Gastrocnemius medialis (tissue), 4 donors: ENCODE measurements at regions of chr2 and their contacts with region 1.

Region 1: GRCh38 chr2:16756831-16757644 is 91.4 kb upstream of the CYRIA start:
- DNase-seq: peak; percentile 54 to 63
- ATAC-seq: peak; percentile 82 to 95
- H3K4me3 ChIP-seq: no peak overlapping the region
- H3K27ac ChIP-seq: peak overlapping the region in 3 of 4 donors; percentile 28 to 57 (median 56)
- H3K4me1 ChIP-seq: no peaks in the 10 kb centered on the region
- H3K27me3 ChIP-seq: no peaks in the 10 kb centered on the region
- CTCF ChIP-seq: peak; percentile 91 to 96 (median 94)
- POLR2A ChIP-seq: no peak

Region 2: DNA sequence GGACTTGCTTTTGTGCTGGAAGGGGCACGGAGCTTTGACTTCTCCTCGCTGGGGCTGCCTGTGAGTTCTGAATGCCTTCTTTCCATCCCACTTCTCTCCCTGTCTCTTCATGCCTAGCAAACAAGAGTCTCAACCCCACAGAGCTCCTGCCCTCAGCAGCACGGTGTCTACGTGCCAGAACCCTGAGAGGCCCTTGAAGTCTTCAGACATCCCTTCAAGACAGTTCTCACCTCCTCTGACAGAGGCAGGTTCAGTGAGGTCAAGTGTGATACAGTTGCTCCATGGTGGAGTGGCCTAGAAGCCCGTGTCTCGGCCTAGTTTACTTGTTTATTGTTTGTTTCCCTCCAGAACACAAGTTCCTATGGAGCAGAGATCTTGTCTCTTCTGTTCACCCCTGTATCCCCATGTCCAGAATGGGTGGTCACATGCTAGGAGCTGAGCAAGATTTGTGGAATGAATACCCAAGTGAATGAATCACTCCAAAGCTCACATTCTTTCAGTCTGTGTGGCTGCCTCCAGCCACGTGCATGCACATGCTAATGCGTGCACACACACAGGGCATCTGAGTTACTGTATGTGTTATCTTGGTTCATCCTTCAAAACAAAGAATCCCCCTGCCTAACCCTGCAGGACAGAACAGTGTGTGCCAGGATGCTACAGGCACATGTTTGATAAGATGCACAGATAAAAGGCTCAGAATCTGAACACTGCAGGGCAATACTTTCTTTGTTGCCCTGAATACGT is 1587.5 kb before region 1 on chr2:
- in situ Hi-C with region 1: no loop called
- intact Hi-C with region 1: no loop called
- DNase-seq: no peak
- ATAC-seq: no peak
- H3K4me3 ChIP-seq: no peak overlapping the region
- H3K27ac ChIP-seq: no peak overlapping the region
- H3K4me1 ChIP-seq: no peaks in the 10 kb centered on the region
- H3K27me3 ChIP-seq: no peaks in the 10 kb centered on the region
- CTCF ChIP-seq: no peak
- POLR2A ChIP-seq: no peak

Region 3: DNA sequence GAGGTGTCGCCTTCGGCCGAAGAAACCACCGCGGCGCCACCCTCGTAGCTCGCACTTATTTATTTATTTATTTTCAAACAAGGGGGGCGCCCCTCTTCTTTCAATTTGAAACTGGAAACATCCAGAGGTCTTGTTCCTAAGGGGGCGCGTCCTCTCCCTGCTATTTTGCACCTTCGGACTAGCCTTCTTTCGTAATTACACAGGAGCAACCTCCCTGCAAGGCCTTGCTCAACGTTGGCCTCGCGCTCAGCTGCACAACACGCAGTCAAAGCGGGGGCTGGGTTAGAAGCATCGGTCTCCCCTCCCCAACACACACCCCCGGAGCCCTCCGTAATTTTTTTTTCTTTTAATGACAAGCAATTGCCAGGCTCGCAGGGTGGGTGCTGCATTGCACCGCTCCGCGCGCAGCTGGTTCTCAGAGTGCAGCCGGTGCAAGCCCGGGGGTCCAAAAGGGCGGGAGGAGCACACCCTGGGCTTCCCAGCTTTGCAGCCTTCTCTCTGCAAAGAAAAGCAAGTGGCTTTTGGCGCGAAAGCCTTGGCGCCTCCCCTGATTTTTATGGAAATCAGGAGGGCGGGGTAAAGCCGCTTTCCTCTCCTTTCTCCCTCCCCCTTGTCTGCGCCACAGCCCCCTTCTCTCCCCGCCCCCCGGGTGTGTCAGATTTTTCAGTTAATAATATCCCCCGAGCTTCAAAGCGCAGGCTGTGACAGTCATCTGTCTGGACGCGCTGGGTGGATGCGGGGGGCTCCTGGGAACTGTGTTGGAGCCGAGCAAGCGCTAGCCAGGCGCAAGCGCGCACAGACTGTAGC is 817.0 kb before region 1 on chr2 and contains the start of gene MYCN:
- in situ Hi-C with region 1: loop called in 3 of 4 experiments (anchors 25 kb)
- intact Hi-C with region 1: loop called (anchors 5 kb)
- DNase-seq: peak; percentile 27 to 32
- ATAC-seq: peak; percentile 25 to 65
- H3K4me3 ChIP-seq: peak within 1 kb of the TSS; percentile 52 to 57 (median 56)
- H3K27ac ChIP-seq: no peak within 1 kb of the TSS
- H3K4me1 ChIP-seq: peaks cover 23 to 43% of the 10 kb centered on the region in 2 donors
- H3K27me3 ChIP-seq: peaks cover 21 to 36% (median 27%) of the 10 kb centered on the region in 3 donors
- CTCF ChIP-seq: peak; percentile 42 to 73 (median 52)
- POLR2A ChIP-seq: no peak
- total RNA-seq, gene MYCN: 0.17 to 0.25 TPM in 2 of 4 donors, not detected in the others

Region 4: GRCh38 chr2:16553226-16553625 is 203.8 kb before region 1 on chr2:
- in situ Hi-C with region 1: no loop called
- intact Hi-C with region 1: loop called (anchors 2 kb)
- DNase-seq: peak in 1 of 2 donors; percentile 20
- ATAC-seq: peak; percentile 51 to 76
- H3K4me3 ChIP-seq: no peak overlapping the region
- H3K27ac ChIP-seq: no peak overlapping the region
- H3K4me1 ChIP-seq: no peaks in the 10 kb centered on the region
- H3K27me3 ChIP-seq: no peaks in the 10 kb centered on the region
- CTCF ChIP-seq: peak; percentile 46 to 61 (median 61)
- POLR2A ChIP-seq: no peak

Region 5: DNA sequence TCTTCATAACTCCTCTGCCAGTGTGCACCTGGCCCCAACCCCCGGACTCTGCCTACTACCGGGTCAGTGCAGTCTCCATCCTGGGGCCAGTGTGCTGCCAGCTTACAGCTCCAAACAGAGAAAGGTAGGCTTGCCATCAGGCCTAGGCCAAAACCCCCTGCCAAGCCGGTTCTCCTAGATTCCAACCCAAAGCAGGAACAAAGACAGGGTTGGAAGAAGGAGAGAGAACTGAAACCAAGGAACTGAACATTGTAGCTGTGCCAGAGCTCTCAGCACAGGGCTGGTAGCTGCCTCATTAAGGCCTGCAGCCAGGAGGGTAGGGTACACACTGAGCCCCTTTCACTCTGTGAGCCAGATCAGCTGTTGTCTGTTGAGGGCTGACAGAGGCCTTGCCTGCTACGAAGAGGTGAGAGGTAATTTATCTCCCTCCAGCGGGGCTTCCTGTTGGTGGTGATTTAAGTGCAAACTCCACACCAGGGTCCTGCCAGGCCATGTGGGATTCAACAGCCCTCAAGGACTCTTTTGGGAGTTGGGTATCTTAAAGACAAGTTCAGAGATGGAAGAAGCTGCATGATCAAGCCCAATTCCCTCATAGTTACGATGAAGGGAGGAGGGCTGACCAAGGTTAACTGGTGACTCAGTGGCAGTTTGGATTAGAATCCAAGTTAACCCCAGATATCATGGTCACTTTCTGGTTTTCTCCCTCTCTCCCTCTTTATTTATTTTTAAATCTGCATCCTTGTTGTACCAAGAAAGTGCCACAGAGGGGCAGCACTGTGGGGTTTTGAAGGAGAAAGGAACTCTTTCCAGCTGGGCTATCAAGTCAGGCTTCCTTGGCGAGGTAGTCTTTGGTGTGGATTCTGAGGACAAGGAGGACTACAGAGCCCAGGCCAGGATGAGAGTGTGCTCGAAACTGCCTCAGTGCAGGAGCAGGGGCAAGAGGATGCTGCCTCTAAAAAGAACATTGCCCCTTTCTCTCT is 139.5 kb before region 1 on chr2:
- in situ Hi-C with region 1: loop called (anchors 5 kb)
- intact Hi-C with region 1: loop called (anchors 1 kb)
- DNase-seq: peak in 1 of 2 donors; percentile 21
- ATAC-seq: peak in 1 of 2 donors; percentile 43
- H3K4me3 ChIP-seq: no peak overlapping the region
- H3K27ac ChIP-seq: peak overlapping the region in 2 of 4 donors; percentile 6 to 10
- H3K4me1 ChIP-seq: peaks cover 12 to 35% of the 10 kb centered on the region in 2 donors
- H3K27me3 ChIP-seq: no peaks in the 10 kb centered on the region
- CTCF ChIP-seq: peak in 4 of 5 experiments; percentile 26 to 48 (median 40)
- POLR2A ChIP-seq: no peak

Region 6: DNA sequence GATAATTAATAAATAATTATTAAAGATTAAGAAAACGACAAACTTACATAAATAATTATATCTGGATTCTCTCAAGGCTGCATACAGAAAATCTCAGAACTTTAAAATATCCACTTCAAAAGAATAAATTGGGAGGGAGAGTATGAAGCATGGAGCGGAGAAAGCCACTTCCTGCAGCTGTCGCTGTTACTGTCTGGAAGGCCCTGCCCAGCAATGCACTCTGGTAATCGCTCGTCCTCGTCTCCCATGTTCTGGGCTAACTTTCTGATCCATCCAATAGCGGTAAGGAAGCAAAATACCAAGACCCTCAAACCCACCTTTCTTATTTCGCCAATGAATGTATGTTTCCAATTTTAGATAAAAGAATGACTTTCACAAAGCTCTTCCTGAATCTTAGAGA is 118.1 kb before region 1 on chr2:
- in situ Hi-C with region 1: no loop called
- intact Hi-C with region 1: loop called (anchors 1 kb)
- DNase-seq: no peak
- ATAC-seq: no peak
- H3K4me3 ChIP-seq: no peak overlapping the region
- H3K27ac ChIP-seq: peak overlapping the region in 1 of 4 donors; percentile 80
- H3K4me1 ChIP-seq: peaks cover 44 to 62% of the 10 kb centered on the region in 2 donors
- H3K27me3 ChIP-seq: no peaks in the 10 kb centered on the region
- CTCF ChIP-seq: no peak
- POLR2A ChIP-seq: no peak